ENCODE measurements at regions of chr1 and their contacts with region 1.

Region 1: DNA sequence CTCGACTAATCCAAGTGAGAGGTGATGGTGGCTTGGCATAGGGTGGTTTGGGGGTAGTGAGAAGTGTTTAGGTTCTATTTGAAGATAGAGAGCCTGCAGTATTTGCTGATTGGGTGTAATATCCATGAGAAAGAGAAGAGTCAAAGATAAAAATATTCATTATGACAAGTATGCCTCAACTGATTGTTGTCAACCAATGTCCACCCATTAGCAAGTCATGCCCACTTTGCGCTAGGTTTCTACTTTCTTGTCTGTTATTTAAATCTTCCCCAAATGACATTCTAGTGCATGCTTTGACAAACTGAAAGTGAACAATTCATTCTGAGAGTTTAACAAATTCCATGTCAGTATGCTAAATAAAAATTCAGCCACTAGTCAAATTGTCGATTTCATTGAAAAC is 3.8 kb upstream of the XCL1 start:
- DNase-seq: no peak
- H3K4me3 ChIP-seq: no peak overlapping the region
- CTCF ChIP-seq: no peak
- POLR2A ChIP-seq: no peak

Region 2: DNA sequence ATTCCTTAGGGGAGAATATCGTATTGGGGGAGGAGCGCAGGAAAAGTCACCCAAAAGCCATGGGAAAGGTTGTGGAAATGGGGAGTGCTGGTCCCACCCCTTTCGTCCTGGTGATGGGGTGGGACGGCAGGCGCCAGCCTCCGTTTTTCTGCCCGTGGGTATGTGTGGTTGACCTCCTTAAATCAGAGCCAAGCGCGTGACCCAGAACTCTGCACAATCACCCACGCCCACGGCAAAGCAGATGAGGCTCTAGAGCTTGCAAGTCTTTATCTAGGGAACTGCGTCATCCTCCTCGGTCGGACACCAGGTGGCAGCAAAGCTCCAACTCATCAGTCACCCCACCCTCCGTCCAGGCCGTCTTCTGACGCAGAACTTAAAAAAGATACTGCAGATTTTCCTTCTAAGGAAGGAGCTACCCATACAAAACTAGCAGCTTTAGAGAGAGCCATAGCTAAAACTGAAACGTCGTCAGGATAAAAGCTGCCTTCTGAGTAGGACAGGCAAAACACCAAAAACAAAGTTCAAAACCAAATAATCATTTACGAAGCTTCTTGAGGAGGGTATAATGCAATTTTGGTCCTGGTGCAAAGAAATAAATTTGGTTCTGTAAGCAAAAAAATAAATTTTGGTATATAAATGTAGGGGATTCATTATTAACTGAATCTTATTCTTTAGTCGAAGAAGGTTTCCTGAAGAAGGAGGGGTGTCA is 229.9 kb before region 1 on chr1:
- intact Hi-C with region 1: loop called (anchors 10 kb)
- DNase-seq: peak; percentile 86 to 97
- H3K4me3 ChIP-seq: no peak overlapping the region
- CTCF ChIP-seq: no peak
- POLR2A ChIP-seq: no peak

Region 3: DNA sequence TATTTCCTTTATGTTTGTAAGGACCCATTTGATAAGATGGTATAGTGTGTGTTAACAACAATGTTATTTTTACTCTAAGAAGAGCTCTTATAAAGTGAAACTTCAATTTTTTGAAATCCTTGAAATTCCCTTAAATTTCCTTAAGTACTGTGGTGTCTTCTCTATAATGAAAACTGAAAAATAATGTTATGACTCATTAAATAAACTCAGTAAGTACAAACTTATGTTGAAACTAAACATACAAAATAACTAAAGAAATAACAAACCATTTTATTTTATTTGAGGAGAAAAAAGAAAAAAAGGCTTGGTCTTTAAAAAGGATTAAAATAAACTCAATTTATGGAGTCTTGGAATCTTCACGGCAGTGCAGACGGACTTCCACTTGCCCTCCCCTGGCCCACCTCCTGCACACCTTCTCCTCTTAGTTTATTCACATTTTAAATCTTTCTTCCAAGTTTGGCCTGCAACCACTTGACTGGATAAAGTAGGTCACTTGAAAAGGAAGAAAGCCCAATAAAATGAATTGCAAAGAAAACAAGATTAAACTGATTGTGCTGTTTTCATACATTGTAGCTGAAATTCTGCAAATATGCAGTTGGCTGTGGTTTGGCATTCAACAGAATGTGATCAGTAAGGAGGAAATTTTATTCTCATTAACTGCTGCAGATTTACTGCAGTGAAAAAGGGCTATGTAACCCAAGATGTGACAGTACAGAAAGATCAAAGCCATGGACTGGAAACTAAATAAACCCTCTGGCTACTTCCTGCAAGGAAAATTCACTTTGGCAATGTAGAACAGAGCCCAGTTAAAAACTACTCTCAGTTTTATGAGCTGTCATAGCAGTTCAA is 1369.6 kb after region 1 on chr1:
- intact Hi-C with region 1: no loop called
- DNase-seq: no peak
- H3K4me3 ChIP-seq: no peak overlapping the region
- CTCF ChIP-seq: no peak
- POLR2A ChIP-seq: no peak

Measured in lower leg skin (tissue), 4 donors.